PC-9 (cell line): ENCODE measurements at regions of chr7 and their contacts with region 1.

Region 1: GRCh38 chr7:41579961-41580940 is 122.6 kb downstream of the INHBA start:
- DNase-seq: peak; percentile 40 to 99
- H3K4me3 ChIP-seq: no peak overlapping the region
- H3K27ac ChIP-seq: peak overlapping the region; percentile 74
- H3K4me1 ChIP-seq: peaks cover 35% of the 10 kb centered on the region
- H3K27me3 ChIP-seq: no peaks in the 10 kb centered on the region
- CTCF ChIP-seq: no peak

Region 2: DNA sequence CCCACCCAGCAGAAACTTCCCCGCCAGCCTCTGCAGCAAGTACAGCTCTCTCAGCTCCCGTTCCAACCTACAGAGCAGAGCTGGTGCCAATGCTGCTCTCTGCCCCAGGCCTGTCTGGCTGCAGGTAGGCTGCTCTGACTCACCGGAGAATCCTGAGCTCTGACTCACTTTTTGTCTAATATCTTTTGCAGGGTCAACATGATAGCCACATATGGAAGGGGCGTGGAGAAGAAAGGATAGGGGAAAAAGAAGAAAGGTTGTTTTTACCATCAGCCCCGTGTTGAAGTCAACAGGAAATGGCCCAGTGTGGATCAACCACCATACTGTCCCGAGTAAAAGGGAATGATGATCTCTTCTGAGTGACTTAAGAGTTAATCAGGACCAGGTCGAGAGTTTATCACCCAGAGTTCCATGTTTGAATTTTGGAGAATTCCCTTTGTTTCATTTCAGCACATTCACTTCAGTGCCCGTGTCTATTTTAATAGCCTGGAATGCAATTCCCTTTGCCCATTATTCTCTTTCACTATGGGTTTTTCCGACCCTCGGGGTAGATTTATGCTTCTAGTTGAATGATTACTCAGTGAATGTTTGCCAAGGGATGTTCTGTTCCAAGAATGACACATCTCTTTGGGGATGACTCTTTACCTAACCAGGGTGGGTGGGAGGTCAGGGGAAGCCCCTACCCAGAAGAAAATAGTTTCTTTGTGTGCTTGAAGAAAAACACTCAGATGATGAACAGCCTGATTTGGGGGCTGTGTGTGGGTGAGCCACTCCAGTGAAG is 472.4 kb before region 1 on chr7:
- CTCF ChIA-PET with region 1: no interaction called
- POLR2A ChIA-PET with region 1: no interaction called
- intact Hi-C with region 1: loop called (anchors 1 kb)
- DNase-seq: peak; percentile 92 to 100
- H3K4me3 ChIP-seq: peak overlapping the region; percentile 45; the same call in 1 of the 2 replicates
- H3K27ac ChIP-seq: peak overlapping the region; percentile 93
- H3K4me1 ChIP-seq: peaks cover 64% of the 10 kb centered on the region
- H3K27me3 ChIP-seq: no peaks in the 10 kb centered on the region
- CTCF ChIP-seq: no peak

Region 3: DNA sequence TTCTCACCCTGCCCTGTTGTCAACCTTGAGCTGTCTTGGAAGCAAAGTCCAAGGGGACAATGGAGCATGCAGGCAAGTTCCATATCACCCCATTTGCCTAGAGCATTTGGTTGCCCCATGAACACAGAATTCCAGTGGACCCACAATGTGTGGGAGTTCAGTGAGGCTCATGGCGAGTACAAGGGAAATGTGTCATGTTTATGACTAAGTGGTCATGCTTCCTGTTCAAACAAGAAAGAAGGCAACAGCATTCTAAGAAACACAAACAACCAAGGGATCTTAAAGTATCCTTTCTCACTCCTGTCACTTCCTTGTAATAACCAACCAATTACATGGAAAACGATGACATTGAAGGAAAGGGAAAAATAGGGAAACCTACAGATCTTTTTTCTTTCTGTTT is 390.4 kb before region 1 on chr7:
- CTCF ChIA-PET with region 1: no interaction called
- POLR2A ChIA-PET with region 1: interaction called, 12 read pairs
- intact Hi-C with region 1: loop called (anchors 1 kb)
- DNase-seq: peak; percentile 61 to 99
- H3K4me3 ChIP-seq: no peak overlapping the region
- H3K27ac ChIP-seq: peak overlapping the region; percentile 93
- H3K4me1 ChIP-seq: peaks cover 46% of the 10 kb centered on the region
- H3K27me3 ChIP-seq: no peaks in the 10 kb centered on the region
- CTCF ChIP-seq: no peak

Region 4: GRCh38 chr7:41247143-41247865 is 332.9 kb before region 1 on chr7:
- CTCF ChIA-PET with region 1: no interaction called
- POLR2A ChIA-PET with region 1: no interaction called
- intact Hi-C with region 1: loop called (anchors 1 kb)
- DNase-seq: peak; percentile 60 to 99
- H3K4me3 ChIP-seq: no peak overlapping the region
- H3K27ac ChIP-seq: peak overlapping the region; percentile 70
- H3K4me1 ChIP-seq: peaks cover 32% of the 10 kb centered on the region
- H3K27me3 ChIP-seq: no peaks in the 10 kb centered on the region
- CTCF ChIP-seq: no peak

Region 5: DNA sequence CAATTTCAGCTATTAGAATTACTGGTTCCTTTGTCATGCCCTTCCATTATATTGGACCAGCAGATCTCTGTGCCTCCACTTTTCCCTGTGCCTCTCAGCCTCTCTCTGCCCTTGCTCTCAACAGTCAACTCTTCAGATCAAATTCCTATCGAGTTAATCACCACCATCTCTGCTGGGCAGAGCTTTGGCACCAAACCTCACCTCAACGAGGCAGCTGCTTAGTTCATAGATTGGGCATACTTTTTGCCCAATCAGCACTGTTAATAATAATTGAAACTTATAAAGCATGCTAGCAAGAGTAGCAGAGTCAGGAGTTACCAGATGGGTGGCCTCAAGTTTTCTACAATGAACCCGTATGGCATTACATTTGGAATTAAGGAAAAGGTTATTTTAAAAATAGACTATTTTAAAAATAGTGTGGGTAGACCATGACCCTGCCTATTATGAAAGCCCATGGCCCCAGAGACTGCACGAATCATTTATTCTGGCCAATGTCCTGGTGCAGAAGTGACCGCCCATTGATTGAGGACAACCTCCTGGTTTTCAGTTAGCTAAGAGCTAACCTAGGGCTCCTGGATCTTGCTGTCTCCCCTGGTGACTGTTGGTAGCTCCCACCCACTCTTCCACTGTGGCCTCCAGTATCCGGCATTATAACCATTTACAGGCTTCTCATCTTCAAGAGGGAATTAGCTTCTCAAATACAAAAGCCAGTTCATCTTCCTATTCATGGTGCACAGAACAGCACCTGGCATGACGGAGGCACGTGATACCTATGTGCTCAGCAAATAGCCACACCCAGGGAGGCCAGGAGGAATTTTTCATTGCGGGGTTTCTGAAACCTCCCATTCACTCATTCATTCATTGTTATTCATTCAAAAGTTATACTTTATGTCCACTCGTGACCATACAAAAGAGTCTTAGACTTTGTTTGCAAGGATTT is 142.7 kb before region 1 on chr7:
- CTCF ChIA-PET with region 1: no interaction called
- POLR2A ChIA-PET with region 1: no interaction called
- intact Hi-C with region 1: loop called (anchors 5 kb)
- DNase-seq: peak; percentile 33 to 48
- H3K4me3 ChIP-seq: no peak overlapping the region
- H3K27ac ChIP-seq: no peak overlapping the region
- H3K4me1 ChIP-seq: 0 out of 2 replicates have a peak, but pooled peaks cover 4% of the 10 kb centered on the region
- H3K27me3 ChIP-seq: no peaks in the 10 kb centered on the region
- CTCF ChIP-seq: no peak

Region 6: GRCh38 chr7:41696314-41696916 is 116.2 kb after region 1 on chr7:
- CTCF ChIA-PET with region 1: interaction called, 4 read pairs
- POLR2A ChIA-PET with region 1: interaction called, 3 read pairs
- intact Hi-C with region 1: loop called (anchors 1 kb)
- DNase-seq: peak; percentile 68 to 80
- H3K4me3 ChIP-seq: peak overlapping the region; percentile 19; the same call in 1 of the 2 replicates
- H3K27ac ChIP-seq: no peak overlapping the region
- H3K4me1 ChIP-seq: peaks cover 24% of the 10 kb centered on the region
- H3K27me3 ChIP-seq: no peaks in the 10 kb centered on the region
- CTCF ChIP-seq: peak; percentile 75

Region 7: GRCh38 chr7:41892356-41893100 is 312.3 kb after region 1 on chr7:
- CTCF ChIA-PET with region 1: no interaction called
- POLR2A ChIA-PET with region 1: no interaction called
- intact Hi-C with region 1: no loop called
- DNase-seq: peak in 1 of 2 experiments; percentile 26
- H3K4me3 ChIP-seq: no peak overlapping the region
- H3K27ac ChIP-seq: no peak overlapping the region
- H3K4me1 ChIP-seq: no peaks in the 10 kb centered on the region
- H3K27me3 ChIP-seq: no peaks in the 10 kb centered on the region
- CTCF ChIP-seq: no peak; the same call in 1 of the 2 replicates